Left cardiac atrium (tissue), 4 donors: ENCODE measurements at regions of chr13 and their contacts with region 1.

Region 1: DNA sequence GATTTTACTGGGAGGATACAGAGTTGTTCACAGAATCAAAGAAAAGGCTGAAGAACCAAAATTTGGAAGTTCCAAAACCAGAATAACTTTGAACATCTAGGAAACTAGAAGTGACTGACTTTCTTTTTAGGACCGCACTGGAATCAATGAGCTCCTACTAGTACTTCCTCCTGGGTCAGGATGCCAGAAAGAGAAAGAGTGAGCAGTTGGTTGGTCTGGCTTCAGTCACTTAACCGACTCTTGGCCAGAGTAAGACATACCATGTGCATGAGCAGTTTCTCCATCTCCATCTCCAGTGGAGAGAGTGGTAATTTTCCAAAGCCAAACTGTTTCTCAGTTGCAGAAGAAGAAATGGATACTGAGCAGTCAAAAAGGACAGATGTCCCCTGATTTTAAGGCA is 27.1 kb upstream of the MTUS2 start:
- DNase-seq: no peak
- ATAC-seq: peak in 1 of 2 donors; percentile 86

Region 2: DNA sequence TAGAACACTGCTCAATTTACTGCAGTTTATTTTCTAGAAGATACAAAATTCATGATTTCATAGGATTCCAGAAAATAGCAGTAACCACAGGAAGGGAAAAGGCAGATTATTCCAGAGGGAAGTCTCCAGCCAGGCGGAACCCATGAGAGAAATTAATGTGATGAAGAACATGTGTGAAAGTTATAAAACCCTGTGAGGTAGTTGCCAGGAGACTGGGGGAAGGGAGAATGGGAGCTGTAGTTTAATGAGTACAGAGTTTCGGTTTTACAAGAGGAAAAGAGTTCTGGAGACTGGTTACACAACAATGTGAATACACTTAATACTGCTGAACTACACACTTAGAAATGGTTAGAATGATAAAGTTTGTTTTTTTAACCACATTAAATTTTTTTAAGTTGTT is 887.3 kb before region 1 on chr13:
- intact Hi-C with region 1: no loop called
- DNase-seq: no peak
- ATAC-seq: no peak

Region 3: DNA sequence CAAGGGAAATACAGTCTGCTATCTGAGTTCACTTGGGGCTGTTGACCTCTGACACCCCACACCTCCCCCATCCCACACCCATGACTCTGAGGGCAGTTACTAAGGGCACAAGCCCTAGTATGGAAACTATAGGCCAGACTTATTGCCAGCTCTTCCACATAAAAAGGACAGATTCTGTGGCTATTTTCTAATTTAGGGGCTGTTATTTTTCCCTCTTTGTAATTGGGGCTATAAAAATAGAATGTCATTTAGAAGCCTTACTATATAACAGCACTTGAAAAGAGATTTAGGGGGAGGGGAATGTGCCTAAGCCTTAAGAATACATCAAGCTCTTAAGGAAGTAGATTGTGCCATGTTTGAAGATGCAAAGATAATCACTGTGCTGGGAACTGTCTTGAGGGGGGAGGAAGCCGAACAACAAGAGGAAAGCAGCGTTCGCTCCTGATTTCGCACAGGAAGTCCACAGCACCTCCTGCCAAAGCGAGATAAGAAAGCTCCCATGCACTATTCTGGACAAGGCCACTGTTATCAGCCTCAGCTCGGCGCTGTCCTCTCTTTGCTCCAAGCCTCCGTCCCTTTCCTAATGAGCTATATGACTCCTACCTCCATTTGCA is 384.6 kb before region 1 on chr13:
- intact Hi-C with region 1: no loop called
- DNase-seq: peak; percentile 80
- ATAC-seq: peak; percentile 84 to 92

Region 4: GRCh38 chr13:28679628-28680027 is 113.4 kb before region 1 on chr13:
- intact Hi-C with region 1: loop called in 1 of 2 experiments (anchors 2 kb)
- DNase-seq: no peak
- ATAC-seq: peak in 1 of 2 donors; percentile 26